ENCODE measurements at regions of chr3 and their contacts with region 1.

Region 1: DNA sequence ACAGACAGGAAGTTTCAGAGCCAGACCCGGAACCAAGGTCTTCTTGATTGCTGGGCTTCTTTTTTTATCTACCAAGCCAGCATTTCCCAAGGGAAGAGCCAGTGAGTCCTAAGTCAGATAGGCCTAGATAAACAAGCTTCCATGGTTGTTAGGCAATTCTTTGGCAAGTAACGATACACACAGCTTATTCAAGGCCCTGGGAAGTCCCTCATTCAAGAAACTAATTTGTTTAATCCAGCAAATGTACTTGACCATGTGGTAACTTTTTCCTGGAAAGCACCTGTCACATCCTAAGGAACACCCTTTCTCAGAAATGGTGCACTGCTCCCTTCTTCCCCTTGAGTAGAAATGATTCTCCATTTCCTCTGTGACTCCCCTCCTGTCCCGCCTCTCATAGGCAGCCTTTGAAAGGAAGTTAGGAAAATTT is 209.9 kb downstream of the ITPR1 start:
- DNase-seq: no peak

Region 2: DNA sequence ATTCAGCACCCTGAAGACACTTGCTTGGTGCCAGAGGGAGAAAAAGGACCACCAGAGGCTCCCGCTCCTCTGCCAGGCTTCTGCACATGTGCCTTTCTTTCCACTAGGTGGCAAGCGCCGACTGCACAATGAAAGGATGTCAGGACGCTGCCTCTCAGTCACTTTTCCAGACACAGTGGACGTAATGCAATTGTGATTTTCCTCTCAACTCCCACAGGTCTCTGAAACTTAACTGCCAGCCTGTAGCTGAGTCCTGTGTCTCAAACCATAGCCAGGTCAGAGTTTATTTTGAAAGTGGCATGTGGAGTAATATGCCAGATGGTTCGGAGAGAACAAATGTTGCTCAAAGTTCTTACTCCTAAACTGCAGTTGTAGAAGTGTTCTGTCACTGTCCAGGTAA is 47.0 kb before region 1 on chr3:
- intact Hi-C with region 1: loop called in 1 of 2 experiments (anchors 5 kb)
- DNase-seq: no peak

Region 3: GRCh38 chr3:4670352-4670751 is 32.7 kb before region 1 on chr3:
- intact Hi-C with region 1: no loop called
- DNase-seq: no peak

Region 4: GRCh38 chr3:5057857-5058324 is 354.8 kb after region 1 on chr3:
- intact Hi-C with region 1: loop called in 1 of 2 experiments (anchors 5 kb)
- DNase-seq: peak; percentile 84

Measured in posterior vena cava (tissue), 2 donors.